ENCODE measurements at regions of chr6 and their contacts with region 1.

Region 1: GRCh38 chr6:98839781-98840361 is 5.5 kb downstream of the POU3F2 start:
- DNase-seq: no peak
- H3K4me3 ChIP-seq: no peak overlapping the region
- H3K4me3 Mint-ChIP-seq: no peak overlapping the region
- H3K27ac Mint-ChIP-seq: no peak overlapping the region
- H3K4me1 ChIP-seq: peaks cover 12% of the 10 kb centered on the region; the same call in 1 of the 2 replicates
- H3K4me1 Mint-ChIP-seq: no peaks in the 10 kb centered on the region
- H3K27me3 ChIP-seq: peaks cover 4% of the 10 kb centered on the region
- H3K27me3 Mint-ChIP-seq: peaks cover 39% of the 10 kb centered on the region
- CTCF ChIP-seq: peak; percentile 27 to 57

Region 2: GRCh38 chr6:98047871-98048270 is 792.0 kb before region 1 on chr6:
- CTCF ChIA-PET with region 1: no interaction called
- POLR2A ChIA-PET with region 1: no interaction called
- intact Hi-C with region 1: loop called (anchors 1 kb)
- DNase-seq: no peak
- H3K4me3 ChIP-seq: no peak overlapping the region
- H3K4me3 Mint-ChIP-seq: no peak overlapping the region
- H3K27ac Mint-ChIP-seq: no peak overlapping the region
- H3K4me1 ChIP-seq: no peaks in the 10 kb centered on the region
- H3K4me1 Mint-ChIP-seq: no peaks in the 10 kb centered on the region
- H3K27me3 ChIP-seq: no peaks in the 10 kb centered on the region
- H3K27me3 Mint-ChIP-seq: peaks cover 3% of the 10 kb centered on the region
- CTCF ChIP-seq: no peak

Region 3: GRCh38 chr6:98787961-98788360 is 51.9 kb before region 1 on chr6:
- CTCF ChIA-PET with region 1: no interaction called
- POLR2A ChIA-PET with region 1: no interaction called
- intact Hi-C with region 1: no loop called
- DNase-seq: no peak
- H3K4me3 ChIP-seq: no peak overlapping the region
- H3K4me3 Mint-ChIP-seq: no peak overlapping the region
- H3K27ac Mint-ChIP-seq: no peak overlapping the region
- H3K4me1 ChIP-seq: no peaks in the 10 kb centered on the region
- H3K4me1 Mint-ChIP-seq: no peaks in the 10 kb centered on the region
- H3K27me3 ChIP-seq: no peaks in the 10 kb centered on the region
- H3K27me3 Mint-ChIP-seq: peaks cover 17% of the 10 kb centered on the region
- CTCF ChIP-seq: no peak

Region 4: DNA sequence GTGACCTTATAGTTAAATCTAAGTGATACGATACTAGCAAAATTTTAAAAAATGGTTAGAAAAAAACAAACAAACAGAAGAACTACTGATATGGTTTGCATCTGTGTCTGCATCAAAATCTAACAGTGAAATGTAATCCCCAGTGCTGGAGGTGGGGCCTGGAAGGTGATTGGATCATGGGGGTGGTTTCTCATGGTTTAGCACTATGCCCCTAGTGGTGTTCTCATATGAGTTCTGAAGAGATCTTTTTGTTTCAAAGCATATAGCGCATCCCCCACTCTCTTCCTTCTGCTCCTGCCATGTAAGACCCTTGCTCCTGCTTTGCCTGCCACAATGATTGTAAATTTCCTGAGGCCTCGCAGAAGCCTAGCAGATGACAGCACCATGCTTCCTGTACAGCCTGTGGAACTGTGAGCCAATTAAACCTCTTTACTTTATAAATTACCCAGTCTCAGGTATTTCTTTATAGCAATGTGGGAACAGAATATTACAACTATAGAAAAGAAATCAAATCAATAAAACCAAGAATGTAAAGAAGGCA is 102.5 kb after region 1 on chr6:
- CTCF ChIA-PET with region 1: no interaction called
- POLR2A ChIA-PET with region 1: no interaction called
- intact Hi-C with region 1: no loop called
- DNase-seq: peak in 1 of 2 experiments; percentile 5
- H3K4me3 ChIP-seq: no peak overlapping the region
- H3K4me3 Mint-ChIP-seq: no peak overlapping the region
- H3K27ac Mint-ChIP-seq: no peak overlapping the region
- H3K4me1 ChIP-seq: peaks cover 30% of the 10 kb centered on the region
- H3K4me1 Mint-ChIP-seq: peaks cover 15% of the 10 kb centered on the region
- H3K27me3 ChIP-seq: no peaks in the 10 kb centered on the region
- H3K27me3 Mint-ChIP-seq: no peaks in the 10 kb centered on the region
- CTCF ChIP-seq: peak in 1 of 2 experiments; percentile 15

Region 5: DNA sequence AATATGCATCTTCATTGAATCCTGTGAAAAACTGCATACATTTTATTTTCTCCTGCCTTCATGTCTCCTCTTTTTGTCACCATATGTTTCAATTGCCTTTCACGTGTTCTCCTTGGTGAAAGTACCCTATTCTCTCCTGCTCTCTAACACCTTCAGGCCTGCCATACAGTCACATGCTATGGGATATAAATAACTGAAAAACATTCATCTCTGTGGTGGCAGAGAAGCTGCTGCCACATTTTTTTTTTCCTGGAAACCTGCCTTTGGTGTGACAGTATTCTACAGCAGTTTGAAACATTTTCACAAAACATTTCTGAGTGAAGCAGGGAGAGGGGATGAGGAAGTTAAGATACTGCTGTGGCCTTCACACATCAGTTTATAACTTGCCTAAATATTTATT is 152.7 kb after region 1 on chr6:
- CTCF ChIA-PET with region 1: no interaction called
- POLR2A ChIA-PET with region 1: no interaction called
- intact Hi-C with region 1: no loop called
- DNase-seq: no peak
- H3K4me3 ChIP-seq: no peak overlapping the region
- H3K4me3 Mint-ChIP-seq: no peak overlapping the region
- H3K27ac Mint-ChIP-seq: no peak overlapping the region
- H3K4me1 ChIP-seq: no peaks in the 10 kb centered on the region
- H3K4me1 Mint-ChIP-seq: no peaks in the 10 kb centered on the region
- H3K27me3 ChIP-seq: no peaks in the 10 kb centered on the region
- H3K27me3 Mint-ChIP-seq: peaks cover 5% of the 10 kb centered on the region
- CTCF ChIP-seq: no peak

Region 6: DNA sequence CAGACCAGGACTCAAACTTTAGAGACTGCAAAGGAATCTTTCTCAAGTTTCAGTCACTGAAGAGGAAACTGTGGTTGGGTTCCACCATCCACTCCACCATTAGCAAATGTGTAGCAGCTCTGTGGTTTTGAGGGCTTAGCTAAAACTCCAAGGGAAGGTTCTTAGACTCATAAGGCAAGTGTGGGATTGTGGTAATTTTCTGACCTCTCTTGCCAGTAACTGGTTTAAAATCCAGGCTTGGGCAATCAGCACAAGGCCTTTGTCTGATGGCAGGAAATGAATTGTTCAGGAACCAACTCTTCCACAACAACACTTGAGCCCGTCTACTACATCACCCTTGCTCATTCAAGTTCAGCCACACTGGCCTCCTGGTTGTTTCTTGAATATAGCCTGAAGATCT is 176.5 kb after region 1 on chr6:
- CTCF ChIA-PET with region 1: no interaction called
- POLR2A ChIA-PET with region 1: no interaction called
- intact Hi-C with region 1: no loop called
- DNase-seq: no peak
- H3K4me3 ChIP-seq: no peak overlapping the region
- H3K4me3 Mint-ChIP-seq: no peak overlapping the region
- H3K27ac Mint-ChIP-seq: no peak overlapping the region
- H3K4me1 ChIP-seq: no peaks in the 10 kb centered on the region
- H3K4me1 Mint-ChIP-seq: no peaks in the 10 kb centered on the region
- H3K27me3 ChIP-seq: no peaks in the 10 kb centered on the region
- H3K27me3 Mint-ChIP-seq: peaks cover 5% of the 10 kb centered on the region
- CTCF ChIP-seq: no peak